Motor neuron (in vitro differentiated cells): ENCODE measurements at regions of chr4 and their contacts with region 1.

Region 1: DNA sequence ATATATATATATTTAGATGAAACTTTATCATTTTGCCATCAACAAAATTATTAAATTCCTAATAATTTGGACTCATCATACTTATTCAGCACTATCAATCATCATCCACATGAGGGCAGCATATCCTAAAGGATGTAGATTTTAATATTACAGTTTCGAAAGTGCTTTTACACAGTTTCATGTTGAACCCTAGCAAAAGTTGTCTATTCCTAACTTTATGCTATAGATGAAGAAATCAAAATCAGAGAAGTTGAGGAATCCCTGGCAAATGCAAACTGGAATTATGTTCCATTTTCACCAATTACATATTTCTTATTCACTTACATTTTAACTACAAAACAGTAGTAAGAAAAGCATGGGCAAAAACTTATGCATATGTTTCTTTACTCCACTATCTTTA is 36.6 kb upstream of the UGT2A1 start:
- ATAC-seq: peak in 1 of 8 experiments; percentile 35
- H3K4me3 ChIP-seq: no peak overlapping the region
- H3K27ac ChIP-seq: no peak overlapping the region
- H3K4me1 ChIP-seq: no peaks in the 10 kb centered on the region

Region 2: GRCh38 chr4:69167300-69167699 is 522.3 kb before region 1 on chr4:
- in situ Hi-C with region 1: no loop called
- ATAC-seq: no peak
- H3K4me3 ChIP-seq: no peak overlapping the region
- H3K27ac ChIP-seq: no peak overlapping the region
- H3K4me1 ChIP-seq: no peaks in the 10 kb centered on the region

Region 3: DNA sequence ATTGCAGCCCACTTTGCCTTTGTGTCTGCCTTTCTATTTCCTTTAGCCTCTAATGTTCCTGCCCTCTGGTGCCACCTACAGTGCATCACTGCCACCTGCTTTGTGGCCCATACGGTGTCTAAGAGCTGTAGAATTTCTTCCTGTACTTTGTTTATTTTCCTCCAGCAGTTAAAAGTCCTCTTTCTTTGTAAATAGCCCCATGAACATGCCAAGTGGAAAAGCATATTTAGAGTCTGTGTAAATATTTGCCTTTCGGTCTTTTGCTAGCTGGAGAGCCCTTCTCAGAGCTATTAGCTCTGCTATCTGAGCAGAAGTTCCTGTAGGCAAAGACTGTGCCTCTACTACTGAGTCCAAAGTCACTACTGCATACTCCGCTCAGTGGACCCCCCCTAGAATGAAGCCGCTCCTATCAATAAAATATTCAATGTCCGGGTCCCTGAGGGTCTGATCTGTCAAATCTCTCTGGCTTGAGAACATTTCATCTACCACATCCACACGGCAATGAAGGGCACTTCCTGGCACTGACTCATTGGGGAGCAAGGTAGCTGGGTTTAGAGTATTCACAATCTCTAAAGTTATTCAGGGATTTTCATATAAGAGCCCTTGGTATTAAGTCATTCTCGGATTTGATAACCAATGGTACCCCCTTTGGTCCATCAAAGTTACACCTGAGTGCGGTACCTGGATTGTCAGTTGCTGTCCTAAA is 134.0 kb after region 1 on chr4:
- in situ Hi-C with region 1: loop called in 1 of 9 experiments (anchors 25 kb)
- ATAC-seq: peak in 3 of 8 experiments; percentile 66 to 98 (median 93)
- H3K4me3 ChIP-seq: no peak overlapping the region
- H3K27ac ChIP-seq: no peak overlapping the region
- H3K4me1 ChIP-seq: no peaks in the 10 kb centered on the region

Region 4: DNA sequence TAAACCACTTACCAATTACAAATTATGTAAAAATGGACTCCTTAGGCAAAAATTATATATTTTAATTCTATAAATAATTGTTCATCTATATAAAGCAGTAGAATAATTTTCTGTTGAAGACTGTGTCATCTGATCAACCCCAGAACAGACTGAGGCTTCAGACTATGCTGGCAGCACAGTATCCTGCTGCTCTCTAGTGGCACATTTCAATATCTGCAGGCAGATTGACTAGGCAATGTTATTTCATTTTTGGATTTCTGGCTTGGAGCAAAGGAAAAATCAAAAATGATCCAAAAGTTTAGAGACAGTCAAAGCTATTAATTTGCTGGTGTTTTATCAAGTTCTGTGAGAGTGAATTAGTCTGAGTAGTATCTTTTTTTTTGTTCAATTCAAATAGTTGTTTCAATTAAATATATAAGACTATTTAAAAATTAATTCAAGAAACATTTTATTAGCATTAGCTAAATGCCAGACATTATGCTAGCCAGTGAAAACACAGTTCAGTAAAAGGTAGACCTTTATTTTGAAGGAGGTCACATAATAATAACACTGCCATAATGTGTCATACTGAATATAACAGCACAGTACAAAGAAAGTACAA is 191.7 kb after region 1 on chr4:
- in situ Hi-C with region 1: loop called in 5 of 9 experiments (anchors 10 to 25 kb)
- ATAC-seq: peak in 5 of 8 experiments; percentile 50 to 85 (median 58)
- H3K4me3 ChIP-seq: no peak overlapping the region
- H3K27ac ChIP-seq: no peak overlapping the region
- H3K4me1 ChIP-seq: no peaks in the 10 kb centered on the region

Region 5: GRCh38 chr4:70080205-70080604 is 390.6 kb after region 1 on chr4:
- in situ Hi-C with region 1: no loop called
- ATAC-seq: no peak
- H3K4me3 ChIP-seq: no peak overlapping the region
- H3K27ac ChIP-seq: no peak overlapping the region
- H3K4me1 ChIP-seq: no peaks in the 10 kb centered on the region

Region 6: DNA sequence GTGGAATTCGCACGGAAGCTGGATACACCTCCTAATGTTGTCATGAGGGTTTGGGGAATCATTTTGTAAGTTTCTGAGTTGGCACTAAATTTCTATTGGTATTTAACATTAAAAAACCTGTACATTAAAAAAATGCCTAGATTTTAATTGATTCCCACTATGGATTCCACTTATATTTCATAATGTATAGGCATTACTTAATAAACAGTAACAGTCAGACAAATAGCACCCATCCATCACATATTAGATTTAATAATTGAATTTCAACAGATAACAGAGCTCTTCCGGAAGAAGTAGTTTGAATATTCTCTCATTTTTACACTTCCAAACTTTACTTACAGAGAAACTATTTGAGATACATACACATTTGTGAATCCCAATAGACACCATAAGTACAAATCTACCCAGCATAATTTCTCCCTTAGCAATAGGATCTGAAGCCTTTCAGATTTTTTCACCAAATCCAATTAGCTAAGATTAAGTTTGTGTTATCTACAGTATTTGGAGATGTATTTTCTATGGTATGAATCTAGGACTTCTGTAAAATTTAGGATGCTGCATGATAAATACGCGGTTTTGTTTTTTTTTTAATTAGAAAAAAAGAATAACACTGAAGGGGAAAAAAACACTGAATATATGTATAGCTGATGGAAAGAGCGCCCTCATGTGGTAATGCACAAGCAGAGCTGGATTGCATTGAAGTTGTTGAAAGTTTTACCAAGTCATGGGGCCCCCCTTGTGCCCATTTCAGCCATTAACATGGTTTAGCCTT is 493.8 kb after region 1 on chr4:
- in situ Hi-C with region 1: loop called in 1 of 9 experiments (anchors 25 kb)
- ATAC-seq: peak in 3 of 8 experiments; percentile 59 to 80 (median 75)
- H3K4me3 ChIP-seq: no peak overlapping the region
- H3K27ac ChIP-seq: no peak overlapping the region
- H3K4me1 ChIP-seq: no peaks in the 10 kb centered on the region

Region 7: DNA sequence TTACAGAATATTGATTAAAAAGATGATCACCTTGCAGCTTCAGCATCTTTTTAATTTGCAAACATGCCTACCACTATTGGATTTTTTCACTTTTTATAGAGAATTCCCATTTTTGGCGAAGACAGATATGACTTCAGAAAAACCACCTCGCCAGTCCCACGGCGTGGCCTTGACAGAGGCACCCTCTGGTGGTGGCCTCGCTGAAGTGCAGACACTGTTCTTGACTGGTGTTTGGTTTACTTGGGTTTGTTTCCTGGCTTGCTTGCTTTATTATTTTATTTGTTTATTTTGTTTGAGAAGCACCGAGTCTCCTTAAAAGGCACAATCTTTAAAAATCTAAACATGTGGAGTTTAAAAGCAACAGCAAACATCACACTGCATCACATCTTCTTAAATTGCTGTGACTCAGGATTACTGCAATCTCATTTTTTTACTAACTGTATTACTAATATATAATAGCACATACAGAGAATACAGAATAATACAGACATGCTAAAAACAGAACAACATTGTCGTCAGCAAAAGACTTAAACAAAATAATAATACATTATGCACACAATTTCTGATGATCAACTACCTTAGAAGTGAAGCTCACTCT is 815.7 kb after region 1 on chr4:
- in situ Hi-C with region 1: loop called in 2 of 9 experiments (anchors 25 kb)
- ATAC-seq: peak in 4 of 8 experiments; percentile 58 to 81 (median 76)
- H3K4me3 ChIP-seq: no peak overlapping the region
- H3K27ac ChIP-seq: no peak overlapping the region
- H3K4me1 ChIP-seq: no peaks in the 10 kb centered on the region

Region 8: DNA sequence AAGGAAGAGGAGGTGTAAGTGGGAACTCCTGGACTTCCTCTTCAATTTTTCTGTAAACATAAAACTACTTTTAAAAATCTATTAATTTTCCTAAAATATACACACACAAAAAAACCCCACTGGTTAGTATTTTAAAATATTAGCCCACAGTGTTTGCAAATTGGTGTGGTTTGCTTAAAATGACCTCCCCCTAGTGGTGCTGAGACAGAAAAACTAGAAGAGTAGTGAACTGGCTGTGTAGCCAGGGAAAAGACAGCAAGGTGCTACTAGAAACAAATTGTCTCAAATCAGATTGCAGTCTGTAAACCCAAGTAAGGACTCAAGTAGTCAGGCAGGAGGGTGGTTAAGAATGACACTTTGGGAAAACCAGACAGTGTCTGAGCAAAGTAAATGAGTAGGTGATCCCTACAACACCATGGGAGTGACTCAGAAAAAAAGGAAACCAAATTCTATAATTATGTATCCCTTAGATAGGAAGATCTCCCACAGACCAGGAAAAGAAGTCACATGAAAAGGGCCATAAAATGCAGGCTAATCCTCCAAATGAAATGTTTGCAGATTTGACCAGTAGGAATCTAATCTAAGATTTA is 854.8 kb after region 1 on chr4:
- in situ Hi-C with region 1: loop called in 1 of 9 experiments (anchors 25 kb)
- ATAC-seq: peak in 3 of 8 experiments; percentile 62 to 70 (median 68)
- H3K4me3 ChIP-seq: no peak overlapping the region
- H3K27ac ChIP-seq: no peak overlapping the region
- H3K4me1 ChIP-seq: no peaks in the 10 kb centered on the region

Region 9: GRCh38 chr4:70559211-70559830 is 869.7 kb after region 1 on chr4:
- in situ Hi-C with region 1: loop called in 1 of 9 experiments (anchors 25 kb)
- ATAC-seq: peak in 4 of 8 experiments; percentile 39 to 66 (median 64)
- H3K4me3 ChIP-seq: no peak overlapping the region
- H3K27ac ChIP-seq: no peak overlapping the region
- H3K4me1 ChIP-seq: no peaks in the 10 kb centered on the region